Activated T-helper 2 cell treated with anti-CD3 and anti-CD28 coated beads, Interferon-gamma antibody, Interleukin-2, Interleukin-4, amounts not matched to agents 10 μg/mL and 5 μg/mL and 100 μg/mL, durations not matched to agents 14 hours and 24 hours and 36 hours (primary cell): ENCODE measurements at regions of chr11 and their contacts with region 1.

Region 1: GRCh38 chr11:83724008-83724461 is 437.9 kb upstream of the CCDC90B start:
- DNase-seq: no peak
- H3K4me3 Mint-ChIP-seq: peak overlapping the region; percentile 35
- H3K27ac Mint-ChIP-seq: no peak overlapping the region
- H3K4me1 Mint-ChIP-seq: no peaks in the 10 kb centered on the region
- H3K27me3 Mint-ChIP-seq: peaks cover 15% of the 10 kb centered on the region

Region 2: GRCh38 chr11:83292709-83293456 is 431.2 kb before region 1 on chr11:
- intact Hi-C with region 1: loop called (anchors 1 kb)
- DNase-seq: no peak
- H3K4me3 Mint-ChIP-seq: no peak overlapping the region
- H3K27ac Mint-ChIP-seq: no peak overlapping the region
- H3K4me1 Mint-ChIP-seq: peaks cover 5% of the 10 kb centered on the region
- H3K27me3 Mint-ChIP-seq: peaks cover 18% of the 10 kb centered on the region

Region 3: DNA sequence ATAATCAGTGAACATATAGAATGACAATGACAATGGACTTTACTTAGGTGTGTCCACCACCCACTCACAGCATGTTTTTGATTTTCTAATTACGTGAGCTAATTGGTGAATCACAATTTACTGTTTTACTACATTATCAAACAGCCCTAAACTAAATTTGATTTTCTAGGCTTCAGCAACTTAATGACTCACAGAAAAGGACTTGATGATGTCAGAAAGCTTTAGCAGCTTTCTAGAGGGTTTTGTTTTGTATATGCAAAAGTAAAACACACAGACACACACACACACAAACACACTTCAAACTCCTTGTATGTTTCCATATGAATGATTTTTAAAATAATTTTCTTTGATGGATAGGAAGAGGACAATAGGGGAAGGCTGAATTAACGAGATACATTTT is 440.7 kb after region 1 on chr11:
- intact Hi-C with region 1: no loop called
- DNase-seq: no peak
- H3K4me3 Mint-ChIP-seq: no peak overlapping the region
- H3K27ac Mint-ChIP-seq: no peak overlapping the region
- H3K4me1 Mint-ChIP-seq: no peaks in the 10 kb centered on the region
- H3K27me3 Mint-ChIP-seq: no peaks in the 10 kb centered on the region